Thyroid gland (tissue), 4 donors: ENCODE measurements at regions of chr10 and their contacts with region 1.

Region 1: GRCh38 chr10:80444646-80445319 is 9.3 kb upstream of the TSPAN14 start:
- DNase-seq: peak; percentile 62 to 74
- H3K4me3 ChIP-seq: no peak overlapping the region
- H3K27ac ChIP-seq: no peak overlapping the region
- H3K4me1 ChIP-seq: peaks cover 11 to 24% of the 10 kb centered on the region in 2 donors
- H3K27me3 ChIP-seq: no peaks in the 10 kb centered on the region
- CTCF ChIP-seq: peak in 5 of 6 experiments; percentile 56 to 94 (median 77)
- POLR2A ChIP-seq: no peak

Region 2: GRCh38 chr10:80333983-80334382 is 110.8 kb before region 1 on chr10:
- intact Hi-C with region 1: no loop called
- DNase-seq: no peak
- H3K4me3 ChIP-seq: no peak overlapping the region
- H3K27ac ChIP-seq: no peak overlapping the region
- H3K4me1 ChIP-seq: no peaks in the 10 kb centered on the region
- H3K27me3 ChIP-seq: no peaks in the 10 kb centered on the region
- CTCF ChIP-seq: no peak
- POLR2A ChIP-seq: no peak

Region 3: GRCh38 chr10:80382989-80383388 is 61.8 kb before region 1 on chr10:
- intact Hi-C with region 1: loop called (anchors 10 kb)
- DNase-seq: peak; percentile 32 to 49
- H3K4me3 ChIP-seq: no peak overlapping the region
- H3K27ac ChIP-seq: no peak overlapping the region
- H3K4me1 ChIP-seq: peaks cover 3 to 9% of the 10 kb centered on the region in 2 donors
- H3K27me3 ChIP-seq: no peaks in the 10 kb centered on the region
- CTCF ChIP-seq: peak in 5 of 6 experiments; percentile 44 to 66 (median 63)
- POLR2A ChIP-seq: no peak

Region 4: GRCh38 chr10:80500572-80501380 is 56.0 kb after region 1 on chr10:
- intact Hi-C with region 1: loop called (anchors 5 kb)
- DNase-seq: no peak
- H3K4me3 ChIP-seq: no peak overlapping the region
- H3K27ac ChIP-seq: peak overlapping the region; percentile 69 to 94 (median 86)
- H3K4me1 ChIP-seq: peaks cover 75 to 98% of the 10 kb centered on the region in 2 donors
- H3K27me3 ChIP-seq: no peaks in the 10 kb centered on the region
- CTCF ChIP-seq: no peak
- POLR2A ChIP-seq: no peak

Region 5: DNA sequence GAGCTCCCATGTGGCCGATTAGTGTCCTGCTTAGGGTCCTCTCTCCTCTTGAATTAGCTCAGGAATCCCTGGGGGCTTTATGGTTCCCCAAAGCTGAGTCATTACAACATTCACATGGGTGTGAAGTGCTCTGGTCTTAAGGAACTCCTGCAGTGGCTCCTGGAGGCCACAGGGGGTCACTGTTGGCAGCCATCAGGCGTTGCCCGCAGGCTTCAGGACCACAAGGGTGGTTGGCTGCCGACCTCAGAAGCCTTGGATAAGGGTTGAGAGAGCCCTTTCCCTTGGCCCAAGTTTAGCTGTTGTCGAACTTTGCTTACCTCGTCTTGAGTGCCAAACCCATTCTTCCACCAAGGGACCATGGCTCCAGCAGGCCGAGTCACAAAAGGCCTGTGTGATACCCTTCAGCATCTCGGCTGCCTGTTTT is 154.7 kb after region 1 on chr10:
- intact Hi-C with region 1: loop called (anchors 10 kb)
- DNase-seq: peak; percentile 71 to 83
- H3K4me3 ChIP-seq: no peak overlapping the region
- H3K27ac ChIP-seq: no peak overlapping the region
- H3K4me1 ChIP-seq: peaks cover 10 to 15% of the 10 kb centered on the region in 2 donors
- H3K27me3 ChIP-seq: no peaks in the 10 kb centered on the region
- CTCF ChIP-seq: peak; percentile 62 to 93 (median 79)
- POLR2A ChIP-seq: no peak